Spleen (tissue), 13 donors: ENCODE measurements at regions of chr4 and their contacts with region 1.

Region 1: DNA sequence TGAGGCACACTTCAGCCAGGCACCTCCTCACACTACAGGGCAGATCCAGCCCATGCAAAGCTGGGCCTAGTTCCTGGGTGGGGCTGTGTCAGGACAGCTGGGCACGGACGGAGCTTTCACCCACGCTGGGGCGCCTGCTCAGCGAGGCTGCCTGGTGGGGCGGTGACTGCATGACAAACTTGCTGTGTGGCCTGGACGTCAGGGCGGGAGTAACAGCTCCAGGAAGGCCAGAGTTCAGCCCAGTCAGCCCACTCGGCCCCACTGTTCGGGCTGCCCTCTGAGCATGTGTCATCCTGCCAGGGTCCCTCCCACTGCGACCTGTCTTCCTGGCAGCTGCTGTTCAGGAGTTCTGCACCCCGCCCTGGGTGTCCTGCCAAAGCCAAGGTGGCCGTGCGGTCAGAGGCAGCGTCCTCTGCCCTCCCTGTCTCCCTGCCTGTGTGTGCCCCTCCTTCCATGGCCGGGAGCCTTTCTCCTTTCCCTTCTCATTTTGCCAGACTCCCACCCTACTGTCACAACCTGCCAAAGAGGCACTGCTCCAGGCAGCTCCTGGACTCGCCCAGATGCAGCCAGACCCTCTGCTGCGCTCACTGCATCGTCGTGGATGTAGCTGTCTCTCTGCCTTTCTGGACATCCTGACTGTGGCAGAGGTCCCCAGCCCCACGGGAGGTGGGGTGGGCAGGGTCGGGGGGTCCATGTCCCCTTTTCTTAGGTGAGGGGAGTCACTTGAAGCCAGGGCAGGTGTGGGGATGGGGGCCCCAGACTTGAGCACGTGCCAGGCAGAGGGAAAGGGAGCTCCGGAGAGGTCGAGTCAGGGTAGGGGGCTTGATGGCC is 33.0 kb upstream of the KIAA0232 start:
- DNase-seq: peak; percentile 88
- H3K4me3 ChIP-seq: no peak overlapping the region
- H3K27ac ChIP-seq: peak overlapping the region in 7 of 8 donors; percentile 1 to 76 (median 61)
- H3K4me1 ChIP-seq: peaks cover 6 to 67% (median 29%) of the 10 kb centered on the region in 6 donors
- H3K27me3 ChIP-seq: no peaks in the 10 kb centered on the region
- CTCF ChIP-seq: no peak
- POLR2A ChIP-seq: no peak

Region 2: GRCh38 chr4:6824071-6824470 is 74.5 kb after region 1 on chr4:
- intact Hi-C with region 1: no loop called
- DNase-seq: no peak
- H3K4me3 ChIP-seq: no peak overlapping the region
- H3K27ac ChIP-seq: no peak overlapping the region
- H3K4me1 ChIP-seq: peaks cover 0 to 25% (median 0%) of the 10 kb centered on the region in 6 donors
- H3K27me3 ChIP-seq: no peaks in the 10 kb centered on the region
- CTCF ChIP-seq: no peak
- POLR2A ChIP-seq: no peak

Region 3: DNA sequence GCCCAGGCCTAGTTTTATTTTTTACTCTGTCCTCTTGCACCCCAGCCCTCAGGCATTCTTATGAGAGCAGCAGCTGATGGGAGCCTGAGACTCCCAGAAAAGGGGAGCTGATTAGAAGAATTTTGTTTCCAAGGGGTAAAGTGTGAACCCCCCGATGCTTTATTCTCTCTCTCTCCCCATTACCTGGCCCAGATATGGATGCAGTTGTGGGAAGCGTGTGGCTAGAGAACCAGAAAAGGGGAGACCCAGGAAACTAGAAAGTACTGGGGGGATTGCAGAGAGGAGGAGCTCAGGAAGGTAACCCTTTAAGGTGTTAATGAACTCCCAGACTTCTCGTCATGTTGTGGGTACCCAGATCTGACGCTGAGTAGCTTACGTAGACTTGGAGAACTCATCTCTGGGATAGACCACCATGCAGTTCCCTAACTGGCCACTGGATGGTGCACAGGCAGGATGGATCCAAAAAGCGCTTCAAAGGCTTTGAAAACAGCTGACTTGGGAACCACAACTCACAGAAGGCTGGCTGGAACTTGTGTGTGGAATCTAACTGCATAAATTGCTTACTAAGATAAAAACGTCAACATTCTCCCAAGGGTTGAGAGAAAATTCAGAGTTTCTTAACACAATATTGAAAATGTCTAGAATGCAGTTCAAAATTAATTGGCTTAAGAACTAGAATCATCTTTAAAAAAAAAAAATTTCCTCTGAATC is 224.7 kb after region 1 on chr4:
- intact Hi-C with region 1: no loop called
- DNase-seq: peak; percentile 87
- H3K4me3 ChIP-seq: no peak overlapping the region
- H3K27ac ChIP-seq: peak overlapping the region in 2 of 8 donors; percentile 18 to 26
- H3K4me1 ChIP-seq: peaks cover 5 to 57% (median 26%) of the 10 kb centered on the region in 6 donors
- H3K27me3 ChIP-seq: no peaks in the 10 kb centered on the region
- CTCF ChIP-seq: peak; percentile 94 to 98 (median 95)
- POLR2A ChIP-seq: no peak

Region 4: DNA sequence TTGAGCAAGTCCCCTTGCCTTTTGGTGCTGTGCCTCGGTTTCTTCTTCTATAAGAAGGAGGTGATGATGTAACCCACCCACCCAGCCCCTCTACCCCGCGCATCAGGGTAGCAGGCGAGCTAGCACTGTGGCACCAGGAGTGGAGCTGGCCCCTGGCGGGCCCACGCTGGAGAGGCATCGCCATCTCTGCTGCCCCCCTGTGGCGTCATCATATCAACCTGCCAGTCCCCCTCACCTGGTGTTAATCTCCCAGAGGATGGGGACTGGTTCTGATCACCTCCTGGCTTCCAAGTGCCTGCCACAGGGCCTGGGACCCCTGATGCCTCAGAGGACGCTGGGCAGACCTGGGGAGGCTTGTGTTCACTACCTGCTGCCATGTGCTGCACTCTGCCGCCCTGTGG is 436.5 kb after region 1 on chr4:
- intact Hi-C with region 1: loop called (anchors 10 kb)
- DNase-seq: peak; percentile 70
- H3K4me3 ChIP-seq: no peak overlapping the region
- H3K27ac ChIP-seq: no peak overlapping the region
- H3K4me1 ChIP-seq: no peaks in the 10 kb centered on the region
- H3K27me3 ChIP-seq: peaks cover 0 to 56% (median 13%) of the 10 kb centered on the region in 7 donors
- CTCF ChIP-seq: peak in 5 of 11 experiments; percentile 28 to 43 (median 32)
- POLR2A ChIP-seq: no peak